ENCODE measurements at regions of chr11 and their contacts with region 1.

Region 1: DNA sequence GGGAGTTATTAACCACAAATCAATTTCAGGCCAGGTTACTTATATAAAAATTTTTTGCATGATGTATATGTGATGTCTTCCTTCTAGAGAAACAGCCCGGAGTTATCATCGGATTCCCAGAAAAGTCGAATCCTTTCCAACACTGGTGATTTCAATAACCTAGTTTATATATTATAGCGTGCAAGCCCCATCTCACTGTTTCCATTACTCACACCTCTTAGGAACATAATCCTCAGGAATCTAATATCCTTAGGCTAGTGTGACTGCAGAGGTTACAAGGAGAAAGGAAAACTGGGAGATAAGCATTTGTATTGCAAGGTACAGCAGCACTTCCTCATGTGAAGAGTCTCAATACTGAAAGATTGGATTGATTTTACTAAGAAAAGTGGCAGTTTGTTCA is 20.3 kb downstream of the ARHGAP20 start:
- DNase-seq: no peak
- ATAC-seq: no peak
- H3K4me3 ChIP-seq: no peak overlapping the region
- H3K4me3 Mint-ChIP-seq: no peak overlapping the region
- H3K27ac ChIP-seq: no peak overlapping the region
- H3K27ac Mint-ChIP-seq: no peak overlapping the region
- H3K4me1 ChIP-seq: no peaks in the 10 kb centered on the region
- H3K4me1 Mint-ChIP-seq: no peaks in the 10 kb centered on the region
- H3K27me3 ChIP-seq: no peaks in the 10 kb centered on the region
- H3K27me3 Mint-ChIP-seq: peaks cover 3% of the 10 kb centered on the region
- CTCF ChIP-seq: no peak

Region 2: DNA sequence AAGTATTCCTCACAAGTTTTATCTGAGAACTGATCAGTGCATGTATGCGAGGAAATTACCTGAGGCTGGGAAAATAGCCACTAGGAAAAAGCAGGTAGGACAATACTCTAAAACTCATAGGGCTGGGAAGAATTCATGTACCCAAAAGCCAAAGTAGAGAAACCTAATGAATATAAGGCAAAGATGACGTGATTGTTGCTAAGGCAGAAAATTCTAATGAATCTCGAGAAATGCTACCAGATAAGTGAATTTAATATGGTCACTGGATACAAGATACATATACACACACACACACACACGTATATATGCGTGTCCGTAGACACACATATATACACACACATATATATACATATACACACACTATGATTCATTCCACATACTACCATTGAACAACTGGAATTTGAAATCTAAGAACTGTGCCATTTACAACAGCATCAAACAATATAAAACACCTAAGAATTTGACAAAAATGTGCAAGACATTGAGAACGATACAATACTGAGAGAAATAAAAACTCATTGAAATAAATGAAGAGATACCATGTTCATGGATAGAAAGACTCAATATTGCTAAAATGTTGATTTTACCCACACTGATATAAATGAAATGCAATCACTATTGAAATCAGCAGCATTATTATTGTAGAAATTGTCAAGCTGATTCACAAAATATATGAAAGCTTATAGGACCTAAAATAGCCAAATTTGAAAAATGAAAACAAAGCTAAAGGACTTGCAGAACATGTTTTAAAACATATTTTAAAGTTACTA is 26.0 kb before region 1 on chr11:
- CTCF ChIA-PET with region 1: no interaction called
- POLR2A ChIA-PET with region 1: no interaction called
- intact Hi-C with region 1: loop called in 1 of 2 experiments (anchors 2 kb)
- DNase-seq: no peak
- ATAC-seq: no peak
- H3K4me3 ChIP-seq: no peak overlapping the region
- H3K4me3 Mint-ChIP-seq: no peak overlapping the region
- H3K27ac ChIP-seq: no peak overlapping the region
- H3K27ac Mint-ChIP-seq: no peak overlapping the region
- H3K4me1 ChIP-seq: no peaks in the 10 kb centered on the region
- H3K4me1 Mint-ChIP-seq: no peaks in the 10 kb centered on the region
- H3K27me3 ChIP-seq: no peaks in the 10 kb centered on the region
- H3K27me3 Mint-ChIP-seq: no peaks in the 10 kb centered on the region
- CTCF ChIP-seq: no peak

Region 3: GRCh38 chr11:110759972-110760381 is 68.1 kb after region 1 on chr11:
- CTCF ChIA-PET with region 1: no interaction called
- POLR2A ChIA-PET with region 1: no interaction called
- intact Hi-C with region 1: loop called in 1 of 2 experiments (anchors 10 kb)
- DNase-seq: no peak
- ATAC-seq: no peak
- H3K4me3 ChIP-seq: no peak overlapping the region
- H3K4me3 Mint-ChIP-seq: no peak overlapping the region
- H3K27ac ChIP-seq: no peak overlapping the region
- H3K27ac Mint-ChIP-seq: no peak overlapping the region
- H3K4me1 ChIP-seq: no peaks in the 10 kb centered on the region
- H3K4me1 Mint-ChIP-seq: no peaks in the 10 kb centered on the region
- H3K27me3 ChIP-seq: no peaks in the 10 kb centered on the region
- H3K27me3 Mint-ChIP-seq: peaks cover 11% of the 10 kb centered on the region
- CTCF ChIP-seq: no peak

Region 4: GRCh38 chr11:110818032-110818687 is 126.2 kb after region 1 on chr11:
- CTCF ChIA-PET with region 1: no interaction called
- POLR2A ChIA-PET with region 1: no interaction called
- intact Hi-C with region 1: no loop called
- DNase-seq: no peak
- ATAC-seq: no peak
- H3K4me3 ChIP-seq: no peak overlapping the region
- H3K4me3 Mint-ChIP-seq: no peak overlapping the region
- H3K27ac ChIP-seq: no peak overlapping the region
- H3K27ac Mint-ChIP-seq: no peak overlapping the region
- H3K4me1 ChIP-seq: no peaks in the 10 kb centered on the region
- H3K4me1 Mint-ChIP-seq: no peaks in the 10 kb centered on the region
- H3K27me3 ChIP-seq: no peaks in the 10 kb centered on the region
- H3K27me3 Mint-ChIP-seq: peaks cover 3% of the 10 kb centered on the region
- CTCF ChIP-seq: no peak

Measured in CD8-positive, alpha-beta T cell (primary cell).